ENCODE measurements at regions of chr9 and their contacts with region 1.

Region 1: GRCh38 chr9:21812946-21813568 is 10.6 kb downstream of the MTAP start:
- DNase-seq: peak; percentile 72
- ATAC-seq: peak; percentile 71
- H3K4me3 Mint-ChIP-seq: no peak overlapping the region
- H3K27ac Mint-ChIP-seq: peak overlapping the region; percentile 69
- H3K4me1 Mint-ChIP-seq: peaks cover 42% of the 10 kb centered on the region
- H3K27me3 Mint-ChIP-seq: no peaks in the 10 kb centered on the region
- CTCF ChIP-seq: peak; percentile 85

Region 2: DNA sequence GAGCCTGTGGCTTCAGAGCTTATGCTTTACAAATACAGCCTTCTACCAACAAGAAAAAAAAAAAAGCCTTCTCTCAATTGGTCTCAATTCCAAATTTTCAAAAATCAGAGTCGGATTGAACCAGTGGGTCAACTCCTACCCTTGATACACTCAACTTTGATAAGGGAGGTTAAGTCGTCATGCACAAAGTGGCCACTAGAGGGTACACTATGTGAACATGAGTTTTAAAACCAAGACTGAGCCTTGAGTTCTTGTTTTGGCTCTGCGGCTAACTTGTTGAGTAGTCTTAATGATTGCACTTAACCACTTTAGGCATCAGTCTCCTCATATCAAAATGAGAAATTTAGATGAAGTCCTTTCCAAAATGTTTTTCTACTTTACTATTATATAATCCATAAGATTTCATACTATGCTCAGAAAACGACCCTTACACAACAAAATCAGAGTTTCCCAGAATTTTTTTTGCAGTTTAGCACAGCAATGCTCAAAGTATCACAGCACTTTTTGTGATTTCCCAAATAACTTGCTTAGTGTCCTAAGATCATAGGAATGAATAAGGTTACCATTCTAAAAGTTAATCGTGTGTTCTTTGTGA is 103.5 kb before region 1 on chr9:
- CTCF ChIA-PET with region 1: no interaction called
- POLR2A ChIA-PET with region 1: no interaction called
- intact Hi-C with region 1: no loop called
- DNase-seq: peak; percentile 88
- ATAC-seq: peak; percentile 87
- H3K4me3 Mint-ChIP-seq: no peak overlapping the region
- H3K27ac Mint-ChIP-seq: no peak overlapping the region
- H3K4me1 Mint-ChIP-seq: peaks cover 16% of the 10 kb centered on the region
- H3K27me3 Mint-ChIP-seq: no peaks in the 10 kb centered on the region
- CTCF ChIP-seq: peak; percentile 83

Region 3: DNA sequence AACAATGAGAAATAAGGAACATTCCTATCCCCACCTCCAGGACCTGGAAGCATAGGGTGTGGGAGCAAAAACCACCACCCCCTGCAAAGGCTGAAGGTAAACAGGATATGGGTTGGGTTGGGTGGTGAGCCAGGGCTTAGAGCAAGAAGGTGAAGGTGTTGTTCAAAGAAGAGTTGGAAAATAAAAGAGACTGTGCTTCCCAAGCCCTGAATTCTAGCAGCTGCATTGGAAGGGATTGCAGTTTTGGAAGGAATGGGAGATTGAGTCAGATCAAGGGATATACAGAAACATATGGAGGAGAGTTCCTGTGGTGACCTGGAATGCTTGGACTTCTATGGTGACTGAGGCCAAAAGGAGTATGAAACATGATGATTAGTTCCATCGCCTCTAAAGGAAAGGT is 35.4 kb before region 1 on chr9:
- CTCF ChIA-PET with region 1: no interaction called
- POLR2A ChIA-PET with region 1: no interaction called
- intact Hi-C with region 1: no loop called
- DNase-seq: no peak
- ATAC-seq: no peak
- H3K4me3 Mint-ChIP-seq: no peak overlapping the region
- H3K27ac Mint-ChIP-seq: no peak overlapping the region
- H3K4me1 Mint-ChIP-seq: peaks cover 3% of the 10 kb centered on the region
- H3K27me3 Mint-ChIP-seq: no peaks in the 10 kb centered on the region
- CTCF ChIP-seq: no peak

Region 4: GRCh38 chr9:21890696-21891095 is 77.6 kb after region 1 on chr9:
- CTCF ChIA-PET with region 1: no interaction called
- POLR2A ChIA-PET with region 1: no interaction called
- intact Hi-C with region 1: no loop called
- DNase-seq: no peak
- ATAC-seq: no peak
- H3K4me3 Mint-ChIP-seq: no peak overlapping the region
- H3K27ac Mint-ChIP-seq: no peak overlapping the region
- H3K4me1 Mint-ChIP-seq: no peaks in the 10 kb centered on the region
- H3K27me3 Mint-ChIP-seq: no peaks in the 10 kb centered on the region
- CTCF ChIP-seq: no peak

Region 5: DNA sequence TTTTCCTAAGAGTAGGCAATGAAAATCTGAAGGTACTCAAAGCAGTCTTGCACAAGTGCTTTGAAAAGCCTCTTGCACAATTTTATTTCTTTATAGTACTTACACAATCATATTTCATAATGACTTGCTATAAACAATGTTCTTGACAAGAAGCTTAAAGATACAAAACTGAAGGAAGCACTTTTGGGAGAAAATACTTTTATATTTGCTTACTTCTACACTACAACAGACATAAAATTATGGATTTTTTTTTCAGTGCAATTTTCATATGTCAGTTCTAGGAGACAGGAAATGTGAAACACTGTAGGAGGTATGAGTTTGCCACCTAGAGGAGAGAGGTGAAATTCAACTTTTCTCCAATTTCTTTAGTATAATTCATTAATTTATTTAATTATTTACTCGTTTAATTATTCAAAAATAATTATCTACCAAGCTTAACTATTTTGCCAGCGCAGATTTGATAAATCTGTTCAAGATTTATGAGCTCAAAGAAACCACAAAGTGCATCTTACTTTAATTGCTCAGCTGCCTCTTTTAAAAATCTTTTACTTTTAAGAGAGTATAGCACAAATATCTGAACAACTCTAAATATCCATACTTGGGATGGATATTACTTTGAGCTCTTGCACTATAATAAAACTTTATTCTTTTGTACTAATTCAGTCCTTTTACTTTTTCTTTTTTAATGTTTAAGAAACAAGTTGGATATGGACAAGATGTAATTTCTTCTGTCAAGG is 225.1 kb after region 1 on chr9:
- CTCF ChIA-PET with region 1: interaction called, 149 read pairs
- POLR2A ChIA-PET with region 1: no interaction called
- intact Hi-C with region 1: loop called (anchors 5 kb)
- DNase-seq: no peak
- ATAC-seq: peak; percentile 47
- H3K4me3 Mint-ChIP-seq: no peak overlapping the region
- H3K27ac Mint-ChIP-seq: no peak overlapping the region
- H3K4me1 Mint-ChIP-seq: peaks cover 23% of the 10 kb centered on the region
- H3K27me3 Mint-ChIP-seq: no peaks in the 10 kb centered on the region
- CTCF ChIP-seq: peak; percentile 83

Region 6: GRCh38 chr9:22079873-22080341 is 266.9 kb after region 1 on chr9:
- CTCF ChIA-PET with region 1: interaction called, 17 read pairs
- POLR2A ChIA-PET with region 1: interaction called, 4 read pairs
- intact Hi-C with region 1: no loop called
- DNase-seq: peak; percentile 82
- ATAC-seq: peak; percentile 95
- H3K4me3 Mint-ChIP-seq: peak overlapping the region; percentile 16
- H3K27ac Mint-ChIP-seq: peak overlapping the region; percentile 72
- H3K4me1 Mint-ChIP-seq: peaks cover 43% of the 10 kb centered on the region
- H3K27me3 Mint-ChIP-seq: peaks cover 26% of the 10 kb centered on the region
- CTCF ChIP-seq: no peak

Region 7: DNA sequence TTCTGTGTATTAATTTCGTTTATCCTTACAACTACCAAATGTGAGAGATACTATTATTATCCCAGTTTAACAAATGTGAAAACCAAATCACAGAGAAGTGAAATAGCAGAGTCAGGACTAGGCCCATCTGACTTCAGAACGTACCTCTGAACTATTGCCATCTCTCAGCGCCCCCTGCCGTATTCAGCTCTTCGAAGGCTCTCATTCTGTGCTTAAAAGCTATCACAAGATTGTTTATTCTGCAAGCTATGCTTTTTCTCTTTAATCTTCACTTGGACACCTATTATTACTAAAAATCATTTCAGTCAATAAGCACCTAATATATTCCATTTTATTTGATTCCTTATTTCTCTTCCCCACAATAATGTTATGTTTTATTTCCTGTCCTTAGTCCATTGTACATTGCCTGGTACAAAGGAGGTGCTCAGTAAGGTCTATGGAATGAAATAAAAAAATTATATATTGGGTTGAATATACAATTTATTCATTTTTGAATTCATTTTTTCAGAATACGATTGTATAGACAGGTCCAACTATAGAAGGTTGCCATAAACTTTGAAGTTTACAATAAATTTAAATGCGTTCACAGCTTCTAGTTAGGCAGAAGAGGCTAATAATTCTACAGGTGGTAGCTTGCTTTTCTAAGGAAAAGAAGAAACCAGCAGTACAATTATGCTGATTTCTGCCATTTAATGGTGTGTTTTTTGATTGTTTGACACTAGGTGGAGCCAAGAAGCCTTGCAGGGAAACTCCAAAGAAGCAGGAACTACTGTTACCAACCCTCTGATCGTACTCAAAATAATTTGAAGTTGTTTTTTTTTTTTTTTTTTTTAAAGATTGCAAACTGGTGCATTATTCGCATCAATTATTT is 431.3 kb after region 1 on chr9:
- CTCF ChIA-PET with region 1: interaction called, 32 read pairs
- POLR2A ChIA-PET with region 1: no interaction called
- intact Hi-C with region 1: loop called (anchors 2 kb)
- DNase-seq: peak; percentile 61
- ATAC-seq: peak; percentile 38
- H3K4me3 Mint-ChIP-seq: no peak overlapping the region
- H3K27ac Mint-ChIP-seq: no peak overlapping the region
- H3K4me1 Mint-ChIP-seq: peaks cover 29% of the 10 kb centered on the region
- H3K27me3 Mint-ChIP-seq: peaks cover 10% of the 10 kb centered on the region
- CTCF ChIP-seq: peak; percentile 66

Measured in activated CD8-positive, alpha-beta T cell treated with anti-CD3 and anti-CD28 coated beads for 36 hours (primary cell).